Naive thymus-derived CD4-positive, alpha-beta T cell (primary cell): ENCODE measurements at regions of chr18 and their contacts with region 1.

Region 1: DNA sequence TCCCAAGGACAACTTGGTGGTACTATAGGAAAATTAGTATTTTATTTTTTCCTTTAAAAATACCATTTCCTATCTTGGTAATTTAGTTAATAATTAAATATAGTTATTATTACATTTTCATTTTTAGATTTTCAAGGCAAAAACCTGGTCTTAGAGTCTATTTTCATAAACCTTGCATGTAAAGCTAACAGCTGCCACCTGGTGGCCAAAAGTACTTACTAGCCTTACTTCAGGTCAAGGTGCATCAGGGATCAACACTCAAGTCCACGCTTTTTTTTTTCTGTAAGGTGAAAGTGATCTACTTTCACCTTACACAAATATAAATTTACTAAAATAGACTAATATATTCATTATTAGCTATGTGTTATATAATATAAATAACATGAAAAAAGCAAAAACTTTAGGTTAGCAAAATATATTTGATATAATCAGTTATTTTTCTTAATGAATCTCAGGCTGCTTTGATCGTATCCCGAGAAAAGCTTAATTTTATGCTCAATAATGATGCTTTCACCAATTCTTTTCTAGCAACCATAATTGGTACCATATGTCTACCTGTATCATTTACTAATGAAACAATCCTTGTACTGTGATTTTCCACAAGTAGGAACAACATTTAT is 62.5 kb downstream of the RELCH start:
- DNase-seq: peak; percentile 20 to 67 (median 55)
- ATAC-seq: peak; percentile 60
- H3K4me3 ChIP-seq: no peak overlapping the region
- H3K4me3 Mint-ChIP-seq: no peak overlapping the region
- H3K27ac ChIP-seq: no peak overlapping the region
- H3K27ac Mint-ChIP-seq: no peak overlapping the region
- H3K4me1 ChIP-seq: no peaks in the 10 kb centered on the region
- H3K4me1 Mint-ChIP-seq: peaks cover 0 to 1% (median 0%) of the 10 kb centered on the region in 7 donors
- H3K27me3 ChIP-seq: no peaks in the 10 kb centered on the region
- H3K27me3 Mint-ChIP-seq: no peaks in the 10 kb centered on the region

Region 2: GRCh38 chr18:62239475-62239874 is 10.1 kb before region 1 on chr18:
- CTCF ChIA-PET with region 1: interaction called, 3 read pairs
- POLR2A ChIA-PET with region 1: no interaction called
- intact Hi-C with region 1: loop called in 1 of 2 experiments (anchors 1 kb)
- DNase-seq: no peak
- ATAC-seq: no peak
- H3K4me3 ChIP-seq: no peak overlapping the region
- H3K4me3 Mint-ChIP-seq: no peak overlapping the region
- H3K27ac ChIP-seq: no peak overlapping the region
- H3K27ac Mint-ChIP-seq: peak overlapping the region in 1 of 9 donors; percentile 19
- H3K4me1 ChIP-seq: no peaks in the 10 kb centered on the region
- H3K4me1 Mint-ChIP-seq: peaks cover 6 to 28% (median 19%) of the 10 kb centered on the region in 7 donors
- H3K27me3 ChIP-seq: no peaks in the 10 kb centered on the region
- H3K27me3 Mint-ChIP-seq: no peaks in the 10 kb centered on the region